PC-3 (cell line): ENCODE measurements at regions of chr22 and their contacts with region 1.

Region 1: GRCh38 chr22:17785185-17786184 is 11.2 kb upstream of the BID start:
- DNase-seq: peak; percentile 70
- ATAC-seq: peak; percentile 74
- H3K4me3 ChIP-seq: no peak overlapping the region
- H3K27ac ChIP-seq: no peak overlapping the region
- H3K4me1 ChIP-seq: peaks cover 10% of the 10 kb centered on the region
- H3K27me3 ChIP-seq: no peaks in the 10 kb centered on the region
- CTCF ChIP-seq: peak; percentile 66

Region 2: DNA sequence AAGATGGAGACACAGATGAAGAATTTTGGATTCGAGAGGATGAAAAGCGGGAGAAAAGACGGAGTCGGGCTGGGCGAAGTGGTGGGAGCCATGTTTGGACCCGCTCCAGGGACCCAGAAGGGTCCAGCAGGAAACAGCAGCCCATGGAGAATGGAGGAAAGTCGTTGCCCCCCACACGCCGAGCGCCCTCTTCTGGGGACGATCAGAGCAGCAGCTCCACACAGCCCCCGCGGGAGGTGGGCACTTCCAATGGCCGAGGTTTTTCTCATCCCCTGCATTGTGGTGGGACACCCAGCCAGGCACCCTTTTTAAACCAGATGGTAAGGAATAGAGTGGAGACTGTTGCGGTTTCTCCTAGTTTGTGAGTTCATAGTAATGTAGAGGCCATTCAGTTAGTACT is 245.0 kb before region 1 on chr22:
- CTCF ChIA-PET with region 1: interaction called, 10 read pairs
- POLR2A ChIA-PET with region 1: no interaction called
- intact Hi-C with region 1: no loop called
- DNase-seq: no peak
- ATAC-seq: no peak
- H3K4me3 ChIP-seq: no peak overlapping the region
- H3K27ac ChIP-seq: no peak overlapping the region
- H3K4me1 ChIP-seq: no peaks in the 10 kb centered on the region
- H3K27me3 ChIP-seq: no peaks in the 10 kb centered on the region
- CTCF ChIP-seq: 0 out of 2 replicates have a peak, but pooled peaks have one; percentile 10

Region 3: DNA sequence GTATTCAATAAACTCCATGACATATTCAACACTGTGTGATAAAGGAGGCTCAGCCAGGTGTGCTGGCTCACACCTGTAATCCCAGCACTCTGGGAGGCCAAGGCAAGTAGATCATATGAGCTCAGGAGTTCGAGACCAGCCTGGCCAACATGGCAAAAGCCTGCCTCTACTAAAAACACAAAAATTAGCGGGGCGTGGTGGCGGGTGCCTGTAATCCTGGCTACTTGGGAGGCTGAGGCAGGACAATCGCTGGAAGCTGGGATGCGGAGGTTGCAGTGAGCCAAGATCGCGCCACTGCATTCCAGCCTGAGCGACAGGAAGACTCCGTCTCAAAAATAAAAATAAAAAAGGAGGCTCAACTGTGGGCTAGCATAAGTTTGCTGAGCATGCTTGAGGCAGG is 226.3 kb before region 1 on chr22:
- CTCF ChIA-PET with region 1: interaction called, 11 read pairs
- POLR2A ChIA-PET with region 1: no interaction called
- intact Hi-C with region 1: no loop called
- DNase-seq: no peak
- ATAC-seq: no peak
- H3K4me3 ChIP-seq: peak overlapping the region; percentile 60; the same call in 1 of the 2 replicates
- H3K27ac ChIP-seq: no peak overlapping the region
- H3K4me1 ChIP-seq: no peaks in the 10 kb centered on the region
- H3K27me3 ChIP-seq: no peaks in the 10 kb centered on the region
- CTCF ChIP-seq: no peak

Region 4: DNA sequence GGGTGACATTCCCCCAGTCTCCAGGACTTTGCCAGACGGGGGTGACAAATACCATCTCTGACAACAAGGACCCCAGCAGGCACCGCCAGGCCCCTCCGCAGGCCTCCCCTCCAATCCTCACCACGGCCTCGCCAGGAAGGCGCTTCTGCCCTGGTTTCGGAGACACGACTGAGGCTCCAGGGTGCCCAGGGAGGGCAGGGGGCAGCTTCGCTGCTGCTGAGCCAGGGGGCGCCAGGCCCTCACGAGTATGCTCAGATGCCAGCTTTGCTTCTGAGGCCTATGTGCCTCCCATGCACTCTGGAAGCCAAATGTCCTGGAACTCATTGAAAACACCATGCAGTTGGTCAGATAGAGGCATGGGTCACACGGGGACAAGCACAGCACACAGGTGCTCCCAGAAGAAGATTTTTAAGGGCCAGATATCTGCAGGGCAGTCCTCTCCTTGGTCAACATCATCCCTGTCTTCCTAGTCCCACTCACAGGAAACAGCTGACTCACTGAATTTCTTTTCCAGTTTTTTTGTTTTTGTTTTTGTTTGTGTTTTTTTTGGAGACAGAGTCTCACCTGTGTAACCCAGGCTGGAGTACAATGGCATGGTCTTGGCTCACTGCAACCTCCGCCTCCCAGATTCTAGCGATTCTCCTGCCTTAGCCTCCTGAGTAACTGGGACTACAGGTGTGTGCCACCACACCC is 31.1 kb before region 1 on chr22:
- CTCF ChIA-PET with region 1: interaction called, 8 read pairs
- POLR2A ChIA-PET with region 1: no interaction called
- intact Hi-C with region 1: loop called (anchors 1 kb)
- DNase-seq: peak; percentile 7
- ATAC-seq: no peak
- H3K4me3 ChIP-seq: no peak overlapping the region
- H3K27ac ChIP-seq: no peak overlapping the region
- H3K4me1 ChIP-seq: peaks cover 9% of the 10 kb centered on the region; the same call in 1 of the 2 replicates
- H3K27me3 ChIP-seq: no peaks in the 10 kb centered on the region
- CTCF ChIP-seq: peak; percentile 45

Region 5: GRCh38 chr22:17957693-17958092 is 172.2 kb after region 1 on chr22:
- CTCF ChIA-PET with region 1: no interaction called
- POLR2A ChIA-PET with region 1: interaction called, 11 read pairs
- intact Hi-C with region 1: no loop called
- DNase-seq: no peak
- ATAC-seq: no peak
- H3K4me3 ChIP-seq: no peak overlapping the region
- H3K27ac ChIP-seq: no peak overlapping the region
- H3K4me1 ChIP-seq: no peaks in the 10 kb centered on the region
- H3K27me3 ChIP-seq: no peaks in the 10 kb centered on the region
- CTCF ChIP-seq: no peak